ENCODE measurements at regions of chr6 and their contacts with region 1.

Region 1: DNA sequence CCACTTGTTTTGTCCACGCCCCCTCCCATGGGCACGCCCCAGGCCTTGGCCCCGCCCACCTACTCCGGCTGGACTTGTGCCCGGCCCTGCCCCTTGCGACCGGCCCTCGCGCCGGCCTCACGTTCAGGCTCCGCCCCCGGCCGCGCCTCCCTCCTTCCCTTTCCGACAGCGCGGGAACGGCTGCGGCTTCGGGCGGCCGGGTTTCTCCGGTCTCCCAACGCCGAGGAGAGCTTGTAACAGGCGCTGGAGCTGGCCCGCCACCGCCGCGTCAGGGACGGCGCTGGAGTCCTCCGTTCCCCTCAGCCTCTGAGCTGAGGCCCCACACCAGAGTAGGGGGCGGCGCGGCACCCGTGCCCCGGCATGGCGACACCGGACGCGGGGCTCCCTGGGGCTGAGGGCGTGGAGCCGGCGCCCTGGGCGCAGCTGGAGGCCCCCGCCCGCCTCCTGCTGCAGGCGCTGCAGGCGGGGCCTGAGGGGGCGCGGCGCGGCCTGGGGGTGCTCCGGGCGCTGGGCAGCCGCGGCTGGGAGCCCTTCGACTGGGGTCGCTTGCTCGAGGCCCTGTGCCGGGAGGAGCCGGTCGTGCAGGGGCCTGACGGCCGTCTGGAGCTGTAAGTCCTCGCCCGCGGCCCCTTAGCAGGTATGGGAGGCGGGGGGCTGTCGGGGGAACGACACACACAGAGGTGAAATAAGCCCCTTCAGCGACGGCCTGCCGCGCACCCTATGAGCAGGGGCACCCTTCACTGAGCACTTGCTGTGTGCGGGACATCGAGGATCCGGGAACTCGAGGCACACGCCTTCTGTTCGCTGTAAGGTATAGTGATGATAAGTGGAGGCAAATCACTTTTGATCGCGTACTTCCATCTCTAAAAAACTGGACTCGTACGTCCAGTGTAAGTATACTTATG is at the start of gene FANCE:
- DNase-seq: peak; percentile 92
- H3K4me3 Mint-ChIP-seq: peak within 1 kb of the TSS; percentile 74
- H3K27ac Mint-ChIP-seq: no peak within 1 kb of the TSS
- H3K4me1 Mint-ChIP-seq: peaks cover 26% of the 10 kb centered on the region
- H3K27me3 Mint-ChIP-seq: no peaks in the 10 kb centered on the region
- CTCF ChIP-seq: no peak
- total RNA-seq, gene FANCE: 12.3 and 13.3 TPM in 2 replicates

Region 2: DNA sequence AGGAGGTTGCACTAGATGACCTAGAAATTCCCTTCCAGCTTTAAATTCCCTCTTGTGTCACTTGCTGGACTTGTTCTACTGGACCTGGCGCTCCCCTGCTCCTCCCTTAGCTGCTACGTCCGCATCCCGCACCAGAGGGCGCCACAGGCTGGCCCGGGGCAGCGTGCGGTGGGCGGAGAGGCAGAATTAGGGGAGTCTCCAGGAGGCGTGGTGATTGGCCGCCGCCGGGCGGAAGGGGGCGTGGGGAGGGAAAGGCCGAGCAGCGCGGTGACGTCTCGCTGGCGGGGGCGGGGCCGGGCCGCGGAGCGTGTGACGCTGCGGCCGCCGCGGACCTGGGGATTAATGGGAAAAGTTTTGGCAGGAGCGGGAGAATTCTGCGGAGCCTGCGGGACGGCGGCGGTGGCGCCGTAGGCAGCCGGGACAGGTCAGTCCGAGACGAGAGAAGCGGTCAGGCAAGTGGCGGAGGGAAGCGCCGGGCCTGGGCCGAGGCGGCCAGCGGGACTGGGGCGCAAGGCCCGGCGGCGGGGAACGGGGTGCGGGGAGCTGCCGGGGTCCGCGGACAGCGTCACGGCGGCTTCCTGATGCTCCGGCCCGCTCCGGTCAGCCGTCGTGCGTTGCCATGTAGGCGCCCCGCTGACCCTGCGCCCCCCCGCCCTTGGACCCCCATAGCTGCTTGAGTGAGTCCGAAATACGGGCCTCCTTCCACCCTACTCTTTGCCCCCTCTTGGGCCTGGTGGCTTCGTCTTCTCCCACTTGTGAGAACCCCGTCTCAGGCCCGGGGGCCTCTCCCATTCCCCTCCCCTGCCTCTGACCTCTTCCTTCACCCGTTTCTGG is 110.0 kb before region 1 on chr6 and contains the start of gene PPARD:
- CTCF ChIA-PET with region 1: interaction called, 146 read pairs
- POLR2A ChIA-PET with region 1: interaction called, 41 read pairs
- intact Hi-C with region 1: loop called (anchors 1 kb)
- DNase-seq: peak; percentile 97
- H3K4me3 Mint-ChIP-seq: peak within 1 kb of the TSS; percentile 82
- H3K27ac Mint-ChIP-seq: peak within 1 kb of the TSS; percentile 95
- H3K4me1 Mint-ChIP-seq: peaks cover 18% of the 10 kb centered on the region
- H3K27me3 Mint-ChIP-seq: peaks cover 12% of the 10 kb centered on the region
- CTCF ChIP-seq: peak; percentile 95
- total RNA-seq, gene PPARD: 13.8 and 16.8 TPM in 2 replicates

Region 3: DNA sequence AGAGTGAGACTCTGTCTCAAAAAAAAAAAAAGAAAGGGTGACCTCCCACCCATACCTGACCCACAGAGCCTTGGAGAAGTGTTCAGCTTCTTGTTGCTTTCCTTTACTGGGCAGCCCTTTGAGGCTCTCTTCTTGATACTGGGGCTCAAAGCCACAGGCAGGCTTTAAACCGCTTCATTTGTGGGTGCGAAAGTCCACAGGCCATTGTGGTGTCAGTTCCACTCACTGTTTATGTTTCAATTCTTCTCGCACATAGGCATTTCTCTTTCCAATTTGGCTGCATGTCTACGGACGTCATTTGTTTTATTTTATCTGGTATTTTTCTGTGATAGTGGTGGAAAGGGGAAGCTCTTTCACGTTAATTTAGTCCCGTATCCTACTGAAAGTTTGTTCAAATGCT is 75.4 kb before region 1 on chr6:
- CTCF ChIA-PET with region 1: no interaction called
- POLR2A ChIA-PET with region 1: no interaction called
- intact Hi-C with region 1: no loop called
- DNase-seq: no peak
- H3K4me3 Mint-ChIP-seq: no peak overlapping the region
- H3K27ac Mint-ChIP-seq: no peak overlapping the region
- H3K4me1 Mint-ChIP-seq: peaks cover 4% of the 10 kb centered on the region
- H3K27me3 Mint-ChIP-seq: no peaks in the 10 kb centered on the region
- CTCF ChIP-seq: no peak

Region 4: DNA sequence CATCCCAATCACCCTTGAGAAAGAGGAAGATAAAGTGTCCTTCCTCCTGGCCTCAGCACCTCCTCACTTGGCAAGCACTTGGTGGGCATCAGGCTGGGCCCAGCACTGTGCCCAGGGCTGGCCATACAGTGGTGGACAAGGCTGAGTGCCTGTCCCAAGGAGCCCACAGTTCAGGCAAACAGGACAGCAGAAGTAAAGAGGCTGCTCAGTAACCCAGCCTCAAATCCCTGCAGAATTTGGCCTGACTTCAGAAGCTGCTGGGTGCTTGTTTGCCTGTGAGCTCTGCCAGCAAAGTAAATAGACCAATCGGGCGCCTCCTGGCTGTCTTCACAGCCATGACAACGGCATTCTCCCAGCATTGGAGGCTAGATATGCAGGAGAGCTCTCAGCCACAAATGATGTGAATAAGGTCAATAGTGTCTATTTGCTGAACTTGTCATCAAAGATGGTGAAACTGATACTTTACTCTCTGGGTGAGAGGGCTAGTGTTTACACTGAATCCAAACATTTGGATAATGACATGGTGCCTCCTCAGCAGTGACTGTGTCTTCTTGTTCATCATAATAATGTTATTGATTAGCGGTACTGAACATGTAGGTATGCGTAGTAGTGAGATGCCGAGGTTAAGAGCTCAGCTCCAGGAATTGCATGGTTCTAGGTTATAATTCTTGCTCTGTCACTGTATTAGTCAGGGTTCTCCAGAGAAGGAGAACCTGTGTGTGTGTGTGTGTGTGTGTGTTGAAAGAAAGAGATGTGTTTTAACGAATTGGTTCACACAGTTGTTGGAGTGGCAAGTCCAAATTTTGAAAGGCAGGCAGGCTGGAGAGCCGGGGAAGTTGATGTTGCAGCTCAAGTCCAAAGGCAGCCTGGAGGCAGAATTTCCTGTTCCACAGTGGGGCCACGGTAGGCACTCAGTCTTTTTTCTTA is 37.1 kb before region 1 on chr6:
- CTCF ChIA-PET with region 1: interaction called, 5 read pairs
- POLR2A ChIA-PET with region 1: interaction called, 5 read pairs
- intact Hi-C with region 1: loop called (anchors 1 kb)
- DNase-seq: peak; percentile 79
- H3K4me3 Mint-ChIP-seq: no peak overlapping the region
- H3K27ac Mint-ChIP-seq: peak overlapping the region; percentile 2
- H3K4me1 Mint-ChIP-seq: peaks cover 4% of the 10 kb centered on the region
- H3K27me3 Mint-ChIP-seq: no peaks in the 10 kb centered on the region
- CTCF ChIP-seq: peak; percentile 56

Region 5: GRCh38 chr6:35436071-35436855 is 16.2 kb before region 1 on chr6:
- CTCF ChIA-PET with region 1: interaction called, 14 read pairs
- POLR2A ChIA-PET with region 1: interaction called, 4 read pairs
- intact Hi-C with region 1: no loop called
- DNase-seq: no peak
- H3K4me3 Mint-ChIP-seq: no peak overlapping the region
- H3K27ac Mint-ChIP-seq: no peak overlapping the region
- H3K4me1 Mint-ChIP-seq: no peaks in the 10 kb centered on the region
- H3K27me3 Mint-ChIP-seq: no peaks in the 10 kb centered on the region
- CTCF ChIP-seq: no peak

Region 6: GRCh38 chr6:35489995-35490733 is 37.7 kb after region 1 on chr6:
- CTCF ChIA-PET with region 1: no interaction called
- POLR2A ChIA-PET with region 1: interaction called, 11 read pairs
- intact Hi-C with region 1: no loop called
- DNase-seq: no peak
- H3K4me3 Mint-ChIP-seq: no peak overlapping the region
- H3K27ac Mint-ChIP-seq: no peak overlapping the region
- H3K4me1 Mint-ChIP-seq: peaks cover 41% of the 10 kb centered on the region
- H3K27me3 Mint-ChIP-seq: no peaks in the 10 kb centered on the region
- CTCF ChIP-seq: no peak

Region 7: GRCh38 chr6:35496841-35497570 is 44.6 kb after region 1 on chr6 and contains the start of gene TEAD3:
- CTCF ChIA-PET with region 1: no interaction called
- POLR2A ChIA-PET with region 1: interaction called, 13 read pairs
- intact Hi-C with region 1: no loop called
- DNase-seq: peak; percentile 64
- H3K4me3 Mint-ChIP-seq: peak within 1 kb of the TSS; percentile 73
- H3K27ac Mint-ChIP-seq: no peak within 1 kb of the TSS
- H3K4me1 Mint-ChIP-seq: peaks cover 17% of the 10 kb centered on the region
- H3K27me3 Mint-ChIP-seq: no peaks in the 10 kb centered on the region
- CTCF ChIP-seq: peak; percentile 31
- total RNA-seq, gene TEAD3: 11.1 and 13.3 TPM in 2 replicates

Region 8: GRCh38 chr6:35508542-35508941 is 56.1 kb after region 1 on chr6:
- CTCF ChIA-PET with region 1: no interaction called
- POLR2A ChIA-PET with region 1: no interaction called
- intact Hi-C with region 1: no loop called
- DNase-seq: no peak
- H3K4me3 Mint-ChIP-seq: no peak overlapping the region
- H3K27ac Mint-ChIP-seq: no peak overlapping the region
- H3K4me1 Mint-ChIP-seq: no peaks in the 10 kb centered on the region
- H3K27me3 Mint-ChIP-seq: peaks cover 14% of the 10 kb centered on the region
- CTCF ChIP-seq: no peak